CD8-positive, alpha-beta T cell (primary cell): ENCODE measurements at regions of chr18 and their contacts with region 1.

Region 1: DNA sequence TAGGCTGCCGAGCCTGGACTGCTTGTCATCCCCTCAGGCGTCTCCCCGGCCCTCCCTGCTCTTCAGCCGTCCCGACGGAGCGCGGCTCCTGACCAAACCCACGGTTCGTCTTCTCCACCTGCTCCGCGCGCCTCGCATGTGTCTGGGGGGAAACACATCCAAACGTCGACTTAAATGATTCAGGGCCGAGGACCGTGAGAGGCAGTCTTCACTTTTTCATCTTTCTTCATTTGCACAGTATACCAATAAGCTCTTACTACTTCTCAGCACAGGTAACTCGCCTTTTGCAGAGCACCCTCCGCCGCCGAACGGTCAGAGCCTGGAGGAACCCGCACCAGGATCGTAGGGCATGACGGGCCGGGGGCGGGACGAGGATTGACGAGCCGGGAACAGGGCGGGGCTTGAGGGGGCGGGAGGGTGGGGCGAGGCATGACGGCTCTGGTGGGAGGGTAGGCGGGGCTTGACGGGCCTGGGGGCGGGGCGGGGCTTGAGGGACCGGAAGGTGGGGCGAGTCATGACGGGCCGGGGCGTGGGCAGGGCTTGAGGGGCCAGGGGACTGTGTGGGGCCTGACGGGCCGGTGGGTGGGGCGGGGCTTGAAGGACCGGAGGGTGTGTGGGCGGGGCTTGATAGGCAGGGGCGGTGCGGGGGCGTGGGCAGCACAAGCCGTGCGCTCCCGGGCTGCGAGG is at the start of gene SEH1L:
- DNase-seq: peak; percentile 97 to 99 (median 99)
- ATAC-seq: peak; percentile 82
- H3K4me3 ChIP-seq: peak within 1 kb of the TSS; percentile 66 to 91
- H3K4me3 Mint-ChIP-seq: peak within 1 kb of the TSS; percentile 96
- H3K27ac ChIP-seq: peak within 1 kb of the TSS; percentile 83 to 85
- H3K27ac Mint-ChIP-seq: peak within 1 kb of the TSS; percentile 99
- H3K4me1 ChIP-seq: peaks cover 22% of the 10 kb centered on the region
- H3K4me1 Mint-ChIP-seq: peaks cover 39% of the 10 kb centered on the region
- H3K27me3 ChIP-seq: no peaks in the 10 kb centered on the region
- H3K27me3 Mint-ChIP-seq: no peaks in the 10 kb centered on the region
- CTCF ChIP-seq: no peak
- total RNA-seq, gene SEH1L: 23.9 to 27.6 TPM

Region 2: DNA sequence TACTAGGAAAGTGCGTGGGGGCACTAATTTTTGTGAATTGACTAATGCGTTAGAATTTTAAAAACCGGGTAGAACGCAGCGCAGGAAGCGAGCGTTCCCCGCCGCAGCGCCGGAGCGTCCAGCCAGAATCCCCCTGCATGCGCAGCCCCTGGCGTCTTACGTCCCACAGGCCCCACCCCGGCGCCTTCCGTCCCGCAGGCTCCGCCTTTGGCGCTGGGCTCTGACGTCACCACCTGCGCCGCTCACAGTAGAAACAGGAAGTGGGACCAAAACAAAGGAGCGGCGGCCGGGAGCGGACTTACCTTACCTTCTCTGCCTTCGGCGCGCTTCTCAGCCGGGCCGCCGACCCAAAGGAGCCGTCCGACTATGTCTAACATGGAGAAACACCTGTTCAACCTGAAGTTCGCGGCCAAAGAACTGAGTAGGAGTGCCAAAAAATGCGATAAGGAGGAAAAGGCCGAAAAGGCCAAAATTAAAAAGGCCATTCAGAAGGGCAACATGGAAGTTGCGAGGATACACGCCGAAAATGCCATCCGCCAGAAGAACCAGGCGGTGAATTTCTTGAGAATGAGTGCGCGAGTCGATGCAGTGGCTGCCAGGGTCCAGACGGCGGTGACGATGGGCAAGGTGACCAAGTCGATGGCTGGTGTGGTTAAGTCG is 1096.2 kb before region 1 on chr18 and contains the start of gene CHMP1B:
- CTCF ChIA-PET with region 1: no interaction called
- POLR2A ChIA-PET with region 1: no interaction called
- intact Hi-C with region 1: loop called in 1 of 2 experiments (anchors 2 kb)
- DNase-seq: peak; percentile 93 to 99 (median 98)
- ATAC-seq: peak; percentile 83
- H3K4me3 ChIP-seq: peak within 1 kb of the TSS; percentile 94 to 99
- H3K4me3 Mint-ChIP-seq: peak within 1 kb of the TSS; percentile 100
- H3K27ac ChIP-seq: peak within 1 kb of the TSS; percentile 96 to 99
- H3K27ac Mint-ChIP-seq: peak within 1 kb of the TSS; percentile 100
- H3K4me1 ChIP-seq: peaks cover 25% of the 10 kb centered on the region
- H3K4me1 Mint-ChIP-seq: peaks cover 50% of the 10 kb centered on the region
- H3K27me3 ChIP-seq: no peaks in the 10 kb centered on the region
- H3K27me3 Mint-ChIP-seq: no peaks in the 10 kb centered on the region
- CTCF ChIP-seq: no peak
- total RNA-seq, gene CHMP1B: 71.2 to 74.2 TPM

Region 3: GRCh38 chr18:11980555-11981382 is 966.7 kb before region 1 on chr18:
- CTCF ChIA-PET with region 1: no interaction called
- POLR2A ChIA-PET with region 1: no interaction called
- intact Hi-C with region 1: loop called (anchors 2 to 5 kb)
- DNase-seq: peak; percentile 88 to 97 (median 92)
- ATAC-seq: peak; percentile 90
- H3K4me3 ChIP-seq: peak overlapping the region; percentile 56 to 68
- H3K4me3 Mint-ChIP-seq: peak overlapping the region; percentile 85
- H3K27ac ChIP-seq: no peak overlapping the region
- H3K27ac Mint-ChIP-seq: peak overlapping the region; percentile 52
- H3K4me1 ChIP-seq: no peaks in the 10 kb centered on the region
- H3K4me1 Mint-ChIP-seq: peaks cover 11% of the 10 kb centered on the region
- H3K27me3 ChIP-seq: peaks cover 0 to 2% of the 10 kb centered on the region in 2 experiments
- H3K27me3 Mint-ChIP-seq: no peaks in the 10 kb centered on the region
- CTCF ChIP-seq: no peak

Region 4: GRCh38 chr18:12408247-12408869 is 539.1 kb before region 1 on chr18:
- CTCF ChIA-PET with region 1: no interaction called
- POLR2A ChIA-PET with region 1: no interaction called
- intact Hi-C with region 1: loop called in 1 of 2 experiments (anchors 1 kb)
- DNase-seq: peak in 3 of 9 experiments; percentile 31 to 52 (median 42)
- ATAC-seq: peak; percentile 9
- H3K4me3 ChIP-seq: peak overlapping the region in 1 of 2 experiments; percentile 71
- H3K4me3 Mint-ChIP-seq: peak overlapping the region; percentile 72
- H3K27ac ChIP-seq: no peak overlapping the region
- H3K27ac Mint-ChIP-seq: peak overlapping the region; percentile 30
- H3K4me1 ChIP-seq: peaks cover 18% of the 10 kb centered on the region
- H3K4me1 Mint-ChIP-seq: peaks cover 21% of the 10 kb centered on the region
- H3K27me3 ChIP-seq: no peaks in the 10 kb centered on the region
- H3K27me3 Mint-ChIP-seq: peaks cover 10% of the 10 kb centered on the region
- CTCF ChIP-seq: no peak

Region 5: GRCh38 chr18:12455496-12455895 is 492.0 kb before region 1 on chr18:
- CTCF ChIA-PET with region 1: no interaction called
- POLR2A ChIA-PET with region 1: no interaction called
- intact Hi-C with region 1: no loop called
- DNase-seq: no peak
- ATAC-seq: no peak
- H3K4me3 ChIP-seq: no peak overlapping the region
- H3K4me3 Mint-ChIP-seq: no peak overlapping the region
- H3K27ac ChIP-seq: no peak overlapping the region
- H3K27ac Mint-ChIP-seq: no peak overlapping the region
- H3K4me1 ChIP-seq: no peaks in the 10 kb centered on the region
- H3K4me1 Mint-ChIP-seq: no peaks in the 10 kb centered on the region
- H3K27me3 ChIP-seq: no peaks in the 10 kb centered on the region
- H3K27me3 Mint-ChIP-seq: peaks cover 2% of the 10 kb centered on the region
- CTCF ChIP-seq: no peak

Region 6: GRCh38 chr18:12702221-12703095 is 245.0 kb before region 1 on chr18 and contains the starts of genes CEP76 and PSMG2:
- CTCF ChIA-PET with region 1: no interaction called
- POLR2A ChIA-PET with region 1: interaction called, 8 read pairs
- intact Hi-C with region 1: loop called (anchors 1 kb)
- DNase-seq: peak; percentile 68 to 91 (median 83)
- ATAC-seq: peak; percentile 78
- H3K4me3 ChIP-seq: peak within 1 kb of the TSS; percentile 70 to 96
- H3K4me3 Mint-ChIP-seq: peak within 1 kb of the TSS; percentile 96
- H3K27ac ChIP-seq: peak within 1 kb of the TSS; percentile 95 to 98
- H3K27ac Mint-ChIP-seq: peak within 1 kb of the TSS; percentile 100
- H3K4me1 ChIP-seq: peaks cover 30% of the 10 kb centered on the region
- H3K4me1 Mint-ChIP-seq: peaks cover 52% of the 10 kb centered on the region
- H3K27me3 ChIP-seq: no peaks in the 10 kb centered on the region
- H3K27me3 Mint-ChIP-seq: no peaks in the 10 kb centered on the region
- CTCF ChIP-seq: no peak
- total RNA-seq, gene CEP76: 10.9 to 11.0 TPM
- total RNA-seq, gene PSMG2: 80.3 to 81.7 TPM

Region 7: GRCh38 chr18:12990967-12991838 is 43.7 kb after region 1 on chr18 and contains the start of gene CEP192:
- CTCF ChIA-PET with region 1: no interaction called
- POLR2A ChIA-PET with region 1: interaction called, 13 read pairs
- intact Hi-C with region 1: loop called (anchors 1 kb)
- DNase-seq: peak; percentile 94 to 99 (median 97)
- ATAC-seq: peak; percentile 96
- H3K4me3 ChIP-seq: peak within 1 kb of the TSS; percentile 79 to 90
- H3K4me3 Mint-ChIP-seq: peak within 1 kb of the TSS; percentile 98
- H3K27ac ChIP-seq: peak within 1 kb of the TSS; percentile 57 to 75
- H3K27ac Mint-ChIP-seq: peak within 1 kb of the TSS; percentile 97
- H3K4me1 ChIP-seq: peaks cover 27% of the 10 kb centered on the region
- H3K4me1 Mint-ChIP-seq: peaks cover 17% of the 10 kb centered on the region
- H3K27me3 ChIP-seq: no peaks in the 10 kb centered on the region
- H3K27me3 Mint-ChIP-seq: no peaks in the 10 kb centered on the region
- CTCF ChIP-seq: no peak
- total RNA-seq, gene CEP192: 22.8 to 24.3 TPM

Region 8: DNA sequence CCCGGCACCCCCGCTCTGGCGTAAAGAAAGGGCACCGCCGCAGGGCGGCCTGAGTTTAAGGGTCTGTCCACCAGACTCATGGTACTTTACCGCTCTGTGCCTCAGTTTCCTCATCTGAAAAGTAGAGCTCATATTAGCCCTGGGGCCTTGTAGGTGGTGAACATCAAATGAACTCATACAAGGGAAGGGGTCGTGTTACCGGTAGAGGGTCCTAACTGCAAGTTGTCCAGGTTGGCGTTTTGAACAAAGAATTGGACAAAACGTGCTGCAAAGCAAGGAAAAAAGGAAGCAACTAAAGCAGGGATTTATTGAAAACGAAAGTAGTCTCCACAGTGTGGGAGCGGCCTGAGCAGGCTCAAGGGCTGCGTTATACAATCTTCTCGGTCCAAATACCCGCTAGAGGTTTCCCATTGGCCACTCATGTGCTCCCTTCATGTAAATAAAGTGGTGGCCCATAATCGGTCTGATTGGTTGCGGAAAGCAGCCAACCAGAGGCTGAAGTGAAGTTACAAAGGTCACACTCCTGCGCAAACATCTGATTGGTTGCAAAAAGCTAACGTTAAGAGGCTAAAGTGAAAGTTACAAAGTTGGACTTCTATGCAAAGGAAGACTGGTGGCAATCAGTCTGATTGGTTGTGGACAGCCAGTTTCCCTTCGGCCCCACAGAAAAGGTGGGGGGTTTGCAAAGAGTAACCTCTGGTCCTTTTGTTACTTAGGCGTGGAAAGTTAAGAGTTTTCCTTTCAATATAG is 190.3 kb after region 1 on chr18:
- CTCF ChIA-PET with region 1: no interaction called
- POLR2A ChIA-PET with region 1: interaction called, 8 read pairs
- intact Hi-C with region 1: loop called (anchors 1 kb)
- DNase-seq: peak; percentile 28 to 90 (median 61)
- ATAC-seq: peak; percentile 73
- H3K4me3 ChIP-seq: peak overlapping the region; percentile 84 to 98
- H3K4me3 Mint-ChIP-seq: peak overlapping the region; percentile 94
- H3K27ac ChIP-seq: peak overlapping the region; percentile 87 to 90
- H3K27ac Mint-ChIP-seq: peak overlapping the region; percentile 96
- H3K4me1 ChIP-seq: peaks cover 20% of the 10 kb centered on the region
- H3K4me1 Mint-ChIP-seq: peaks cover 28% of the 10 kb centered on the region
- H3K27me3 ChIP-seq: no peaks in the 10 kb centered on the region
- H3K27me3 Mint-ChIP-seq: no peaks in the 10 kb centered on the region
- CTCF ChIP-seq: no peak